ENCODE measurements at regions of chr15 and their contacts with region 1.

Region 1: DNA sequence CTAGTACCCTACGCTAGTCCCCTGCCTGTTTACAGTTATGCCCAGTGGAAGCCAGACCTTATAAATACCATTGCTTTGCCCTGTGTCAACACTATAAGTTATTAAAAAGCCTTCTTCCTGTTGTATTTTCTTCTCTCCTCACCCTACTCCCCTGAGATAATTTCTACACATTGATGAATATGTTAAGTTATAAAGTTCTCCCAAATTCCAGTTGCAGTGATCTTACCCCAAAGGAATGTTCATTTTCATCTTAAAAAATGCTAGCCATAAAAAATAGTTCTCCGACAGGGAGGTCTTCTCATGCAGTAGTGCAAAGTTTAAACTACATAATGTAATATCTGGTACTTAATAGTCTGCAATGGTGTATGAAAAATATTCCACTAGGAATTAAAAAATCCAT is 58.6 kb downstream of the MAP2K5 start:
- DNase-seq: no peak

Region 2: GRCh38 chr15:67458331-67459029 is 142.6 kb before region 1 on chr15:
- CTCF ChIA-PET with region 1: no interaction called
- POLR2A ChIA-PET with region 1: no interaction called
- DNase-seq: no peak

Region 3: DNA sequence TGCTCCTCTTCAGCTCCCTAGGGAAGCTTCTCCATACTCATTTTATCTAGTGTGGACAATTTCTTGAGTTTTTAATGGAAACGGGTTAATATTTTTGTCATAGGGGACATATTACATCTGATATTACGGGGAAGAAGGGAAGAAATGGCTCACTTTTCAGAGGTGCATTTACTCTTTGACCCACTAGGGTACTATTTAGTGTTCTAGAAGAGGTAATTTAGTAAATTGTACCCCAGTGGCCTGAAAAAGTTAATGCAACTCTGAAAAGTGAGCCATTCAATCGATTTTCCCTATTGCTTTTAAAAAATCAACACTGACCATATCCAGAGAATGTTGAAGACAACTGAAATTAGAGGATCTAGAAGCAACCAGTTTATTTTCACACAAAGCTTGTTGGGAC is 12.6 kb after region 1 on chr15:
- CTCF ChIA-PET with region 1: interaction called, 10 read pairs
- POLR2A ChIA-PET with region 1: no interaction called
- DNase-seq: no peak

Measured in HEK293T (cell line).